ENCODE measurements at regions of chr22 and their contacts with region 1.

Region 1: DNA sequence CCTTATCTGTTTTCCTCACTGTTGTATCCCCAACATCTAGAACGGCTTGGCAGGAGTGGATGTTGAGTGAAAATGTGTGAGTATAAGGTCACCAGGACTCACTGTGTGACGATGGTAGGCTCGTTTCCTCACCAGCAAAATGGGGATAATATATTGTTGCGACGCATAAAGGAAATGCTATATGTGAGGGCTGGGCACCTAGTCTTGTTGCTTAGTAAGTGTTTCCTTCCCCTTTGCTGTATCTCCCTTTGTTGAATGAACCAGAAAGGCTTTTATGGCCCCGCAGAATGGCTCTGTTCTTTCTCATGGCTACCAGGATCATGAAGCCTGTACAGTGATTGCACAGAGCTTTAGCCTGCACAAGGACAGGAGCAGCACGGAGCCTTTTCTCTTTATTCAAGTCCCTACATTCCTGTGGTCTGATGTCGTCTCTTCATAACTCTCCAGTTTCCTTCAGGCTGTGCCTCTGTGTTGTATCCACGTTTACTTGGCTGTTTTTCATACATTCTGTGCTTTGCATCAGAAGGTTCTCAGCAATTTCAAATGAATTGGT is 5.4 kb downstream of the TNRC6B start:
- DNase-seq: no peak
- ATAC-seq: peak in 3 of 4 donors; percentile 1 to 7 (median 2)
- H3K4me3 ChIP-seq: no peak overlapping the region
- H3K27ac ChIP-seq: peak overlapping the region; percentile 58 to 92 (median 65)
- H3K4me1 ChIP-seq: peaks cover 0 to 88% (median 41%) of the 10 kb centered on the region in 4 donors
- H3K27me3 ChIP-seq: no peaks in the 10 kb centered on the region
- CTCF ChIP-seq: no peak
- POLR2A ChIP-seq: no peak

Region 2: DNA sequence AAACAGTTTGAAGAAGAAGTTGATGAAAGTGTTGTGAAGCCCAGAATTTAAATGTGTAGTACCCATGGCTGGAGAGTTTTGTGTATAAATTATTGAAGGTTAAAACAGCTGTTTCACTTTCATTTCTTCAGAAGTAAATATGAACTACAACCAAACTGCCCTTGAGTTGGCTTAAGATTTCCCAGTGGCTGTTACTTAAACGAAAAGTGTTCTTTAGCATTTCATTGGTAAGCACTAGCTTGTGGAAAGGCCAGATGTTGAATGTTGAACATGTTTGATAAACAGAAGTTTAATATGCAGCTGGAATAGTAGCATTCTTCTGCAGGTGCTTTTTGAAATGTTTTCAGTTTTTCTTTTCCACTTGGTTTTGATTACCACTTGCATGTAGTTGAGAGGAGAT is 88.6 kb before region 1 on chr22:
- intact Hi-C with region 1: no loop called
- DNase-seq: no peak
- ATAC-seq: peak; percentile 52 to 81 (median 56)
- H3K4me3 ChIP-seq: no peak overlapping the region
- H3K27ac ChIP-seq: no peak overlapping the region
- H3K4me1 ChIP-seq: peaks cover 0 to 7% (median 0%) of the 10 kb centered on the region in 4 donors
- H3K27me3 ChIP-seq: no peaks in the 10 kb centered on the region
- CTCF ChIP-seq: no peak
- POLR2A ChIP-seq: no peak

Region 3: DNA sequence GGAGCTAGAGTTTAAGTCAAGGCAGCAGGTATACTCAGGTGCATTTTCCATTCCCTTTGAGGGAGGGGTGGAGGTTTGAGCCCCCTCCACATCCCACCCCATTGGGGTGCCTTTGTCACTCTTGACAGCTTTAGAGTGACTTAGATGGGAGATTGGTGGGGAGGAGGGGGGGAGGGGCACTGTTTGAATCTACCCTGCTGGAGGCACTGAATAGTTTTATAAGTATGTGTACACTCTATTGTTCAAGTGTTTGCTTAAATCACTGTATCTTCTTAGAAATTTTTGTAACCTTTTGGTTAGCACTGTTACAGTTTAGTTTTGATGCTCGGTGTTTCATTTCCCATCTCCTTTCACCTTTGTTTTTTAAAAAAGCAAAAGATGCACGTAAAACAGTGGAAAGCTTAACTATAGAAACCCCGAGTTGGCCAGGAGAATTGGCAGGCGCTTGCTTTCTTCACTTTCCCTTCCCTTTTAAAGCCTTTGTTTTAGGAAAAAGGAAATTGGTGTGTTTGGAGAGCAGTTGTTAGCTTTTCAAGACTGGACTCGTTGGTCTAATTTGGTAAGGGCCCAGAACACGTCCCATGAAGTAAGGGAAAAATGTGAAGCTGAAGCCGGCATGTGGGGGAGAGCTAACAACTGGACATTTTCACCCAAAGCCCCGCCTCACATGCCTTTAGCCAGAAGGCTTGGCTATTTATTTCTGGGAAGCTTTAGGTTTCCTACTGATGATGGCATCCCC is 37.4 kb after region 1 on chr22:
- intact Hi-C with region 1: no loop called
- DNase-seq: no peak
- ATAC-seq: no peak
- H3K4me3 ChIP-seq: no peak overlapping the region
- H3K27ac ChIP-seq: no peak overlapping the region
- H3K4me1 ChIP-seq: peaks cover 0 to 4% (median 0%) of the 10 kb centered on the region in 4 donors
- H3K27me3 ChIP-seq: no peaks in the 10 kb centered on the region
- CTCF ChIP-seq: no peak
- POLR2A ChIP-seq: no peak

Region 4: GRCh38 chr22:40263191-40263590 is 80.1 kb after region 1 on chr22:
- intact Hi-C with region 1: loop called in 1 of 2 experiments (anchors 5 kb)
- DNase-seq: no peak
- ATAC-seq: peak; percentile 49 to 74 (median 59)
- H3K4me3 ChIP-seq: no peak overlapping the region
- H3K27ac ChIP-seq: peak overlapping the region in 1 of 3 donors; percentile 8
- H3K4me1 ChIP-seq: peaks cover 0 to 8% (median 4%) of the 10 kb centered on the region in 4 donors
- H3K27me3 ChIP-seq: no peaks in the 10 kb centered on the region
- CTCF ChIP-seq: no peak
- POLR2A ChIP-seq: no peak

Region 5: GRCh38 chr22:40276996-40277823 is 94.1 kb after region 1 on chr22:
- intact Hi-C with region 1: loop called in 1 of 2 experiments (anchors 10 kb)
- DNase-seq: no peak
- ATAC-seq: peak in 1 of 4 donors; percentile 23
- H3K4me3 ChIP-seq: peak overlapping the region; percentile 6 to 19 (median 13)
- H3K27ac ChIP-seq: peak overlapping the region; percentile 67 to 84 (median 84)
- H3K4me1 ChIP-seq: peaks cover 0 to 18% (median 0%) of the 10 kb centered on the region in 4 donors
- H3K27me3 ChIP-seq: no peaks in the 10 kb centered on the region
- CTCF ChIP-seq: no peak
- POLR2A ChIP-seq: no peak